GM10248 (cell line): ENCODE measurements at regions of chr1 and their contacts with region 1.

Region 1: DNA sequence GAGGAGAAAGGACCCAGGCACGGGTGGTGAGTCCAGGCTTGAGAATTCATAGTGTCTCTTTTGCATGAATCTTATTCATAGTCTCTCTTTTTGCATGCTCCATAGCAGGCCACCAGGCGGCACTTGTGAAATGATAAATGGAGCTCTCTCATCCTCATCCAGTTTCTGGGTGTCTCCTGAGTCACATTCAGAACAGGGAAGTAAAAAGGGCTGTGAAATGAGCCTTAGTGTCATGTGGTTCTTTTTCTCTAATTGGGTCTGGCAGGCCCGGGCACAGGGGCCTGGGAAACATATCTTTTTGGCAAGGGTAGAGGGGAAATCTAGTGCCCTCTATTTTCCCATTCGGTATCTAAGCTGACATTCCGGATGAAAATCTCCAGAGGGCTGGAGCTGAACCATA is 19.1 kb upstream of the NCF2 start:
- DNase-seq: peak; percentile 48
- CTCF ChIP-seq: peak; percentile 72

Region 2: DNA sequence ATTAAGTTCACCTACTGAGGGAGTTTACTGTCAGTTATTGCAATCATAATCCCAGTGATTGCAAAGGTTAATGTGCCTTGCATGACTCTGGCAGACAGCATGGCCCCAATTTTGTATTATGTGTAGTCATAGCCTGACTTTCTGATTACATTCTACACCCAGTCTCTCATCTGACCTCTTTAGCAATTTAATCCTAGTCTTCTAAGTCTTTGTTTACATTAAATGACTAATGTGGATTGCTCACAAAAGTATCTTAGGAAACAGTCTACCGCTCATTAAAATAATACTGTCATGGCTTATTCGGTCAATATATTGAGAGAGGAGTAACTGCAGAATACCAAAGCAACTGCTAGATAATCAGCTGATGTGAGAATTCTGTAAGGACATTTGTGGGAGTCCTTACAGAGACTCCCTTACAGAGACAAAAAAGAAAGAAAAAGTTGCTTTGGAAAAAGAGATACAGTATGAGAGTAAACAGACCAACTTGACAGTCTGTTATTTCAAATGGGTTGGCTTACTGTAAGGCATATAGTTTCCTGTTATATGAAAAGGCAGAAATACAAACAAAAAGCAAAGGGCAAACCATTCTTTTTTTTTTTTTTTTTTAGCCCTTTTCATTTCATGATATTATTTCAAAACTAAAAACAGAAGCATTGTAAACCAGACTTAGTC is 94.2 kb before region 1 on chr1:
- CTCF ChIA-PET with region 1: no interaction called
- POLR2A ChIA-PET with region 1: no interaction called
- DNase-seq: no peak
- CTCF ChIP-seq: no peak

Region 3: DNA sequence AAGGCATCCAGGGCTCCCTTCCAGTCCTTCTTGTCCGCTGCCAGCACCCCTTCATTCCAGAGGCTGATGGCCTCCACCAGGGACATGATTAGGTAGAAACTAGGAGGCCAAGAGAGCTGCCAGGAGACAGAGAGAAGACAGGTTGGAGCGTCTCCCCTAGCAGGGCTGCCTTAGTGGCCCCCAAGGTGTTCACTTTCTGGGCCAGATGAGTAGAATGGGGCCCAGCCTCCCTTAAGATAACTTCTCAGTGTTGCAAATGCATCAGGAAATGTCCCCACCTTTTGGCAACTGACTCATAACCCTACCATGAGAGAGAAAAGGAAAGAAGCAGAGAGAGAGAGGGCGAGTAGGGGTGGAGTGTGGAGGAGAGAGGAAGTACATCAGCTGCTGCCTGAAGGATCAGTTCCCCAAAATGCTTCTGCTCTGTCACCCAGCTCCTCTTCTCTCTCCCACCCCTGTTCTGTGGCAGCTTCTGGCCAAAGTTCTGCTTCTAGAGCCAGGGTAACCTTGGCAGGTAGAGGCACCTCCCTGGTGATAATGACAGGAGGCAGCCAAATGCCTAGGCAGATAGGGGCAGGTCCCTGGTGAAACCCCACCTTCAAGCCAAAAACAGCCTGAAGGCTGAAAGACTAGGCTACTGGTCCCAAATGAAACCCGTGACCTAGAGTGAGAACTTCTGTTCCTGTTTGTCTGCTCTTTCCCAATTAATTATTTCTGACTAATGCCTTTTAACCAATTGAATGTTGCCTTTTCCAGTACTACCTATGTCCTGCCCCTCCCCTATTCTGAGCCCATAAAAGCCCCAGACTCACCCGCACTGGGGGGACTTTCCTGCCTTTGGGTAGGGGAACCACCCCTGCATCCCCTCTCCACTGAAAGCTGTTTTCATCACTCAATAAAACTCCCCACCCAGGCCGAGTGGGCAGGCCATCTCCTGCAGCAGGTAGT is 18.8 kb before region 1 on chr1 and contains the start of gene NCF2:
- CTCF ChIA-PET with region 1: interaction called, 46 read pairs
- POLR2A ChIA-PET with region 1: no interaction called
- DNase-seq: peak; percentile 83
- CTCF ChIP-seq: peak; percentile 15

Region 4: GRCh38 chr1:183598386-183598785 is 10.9 kb before region 1 on chr1:
- CTCF ChIA-PET with region 1: interaction called, 16 read pairs
- POLR2A ChIA-PET with region 1: no interaction called
- DNase-seq: no peak
- CTCF ChIP-seq: no peak

Region 5: DNA sequence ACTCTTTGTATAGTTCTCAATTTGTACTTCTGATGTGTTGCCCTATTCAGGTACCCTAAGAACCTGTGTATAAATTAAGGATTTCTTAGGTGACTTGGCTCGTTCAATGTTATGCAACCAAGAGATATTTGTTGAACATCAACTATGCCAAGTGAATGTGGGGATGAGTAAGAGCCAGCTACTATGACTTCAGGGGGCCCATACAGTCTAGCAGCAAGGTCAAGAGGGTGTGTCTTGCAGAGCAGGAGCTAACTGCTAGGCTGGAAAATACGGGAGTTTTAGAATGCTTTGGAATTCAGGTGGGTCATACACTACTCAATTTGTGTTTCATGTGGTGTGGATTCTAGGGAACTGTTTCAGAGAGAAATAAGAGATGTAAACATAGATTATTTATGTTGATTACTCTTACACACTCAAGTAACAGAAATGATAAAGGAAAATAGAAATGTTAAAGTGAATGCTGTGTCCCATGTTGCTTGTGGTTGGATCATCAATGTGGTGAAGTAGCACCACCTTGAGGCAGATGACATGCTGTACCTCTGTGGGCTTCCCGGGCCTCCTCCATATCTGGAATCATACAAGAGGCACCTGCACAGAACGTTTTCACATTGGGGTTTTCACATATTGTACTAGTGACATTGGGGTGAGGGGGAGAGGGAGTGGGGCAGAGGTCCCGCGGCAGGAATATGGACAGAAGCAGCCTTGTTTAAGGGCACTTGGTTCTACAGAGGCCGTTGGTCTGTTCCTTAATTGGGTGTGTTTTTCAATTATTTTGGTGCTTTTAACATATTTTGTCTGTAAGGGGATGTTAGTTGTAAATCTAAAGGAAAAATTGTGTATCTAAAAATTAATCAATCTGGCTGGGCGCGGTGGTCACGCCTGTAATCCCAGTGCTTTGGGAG is 13.8 kb after region 1 on chr1:
- CTCF ChIA-PET with region 1: interaction called, 18 read pairs
- POLR2A ChIA-PET with region 1: no interaction called
- DNase-seq: peak; percentile 58
- CTCF ChIP-seq: peak; percentile 78

Region 6: GRCh38 chr1:183630748-183631147 is 21.4 kb after region 1 on chr1:
- CTCF ChIA-PET with region 1: interaction called, 18 read pairs
- POLR2A ChIA-PET with region 1: no interaction called
- DNase-seq: no peak
- CTCF ChIP-seq: no peak

Region 7: GRCh38 chr1:183635606-183636333 is 26.5 kb after region 1 on chr1 and contains the start of gene ARPC5:
- CTCF ChIA-PET with region 1: interaction called, 18 read pairs
- POLR2A ChIA-PET with region 1: no interaction called
- DNase-seq: peak; percentile 96
- CTCF ChIP-seq: no peak

Region 8: DNA sequence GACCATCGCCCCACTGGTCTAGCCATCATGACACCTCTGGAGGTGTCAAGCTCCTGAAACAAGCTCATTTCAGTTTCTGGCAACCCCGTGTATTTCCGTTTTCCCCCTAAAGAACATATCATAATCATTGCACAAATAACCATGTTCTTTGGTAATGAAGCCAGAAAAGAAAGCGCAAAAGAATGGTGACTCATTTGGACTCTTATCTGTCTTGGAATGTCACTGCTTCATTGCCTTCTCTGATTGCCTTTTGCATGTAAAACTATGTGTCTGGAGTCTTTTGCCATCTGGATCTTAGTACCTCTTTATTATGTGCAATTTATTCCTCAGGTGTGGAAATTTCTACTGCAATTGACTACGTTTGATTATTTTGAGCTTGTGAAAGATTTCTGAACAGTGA is 317.7 kb after region 1 on chr1:
- CTCF ChIA-PET with region 1: no interaction called
- POLR2A ChIA-PET with region 1: no interaction called
- DNase-seq: no peak
- CTCF ChIP-seq: no peak